ENCODE measurements at regions of chr7 and their contacts with region 1.

Region 1: DNA sequence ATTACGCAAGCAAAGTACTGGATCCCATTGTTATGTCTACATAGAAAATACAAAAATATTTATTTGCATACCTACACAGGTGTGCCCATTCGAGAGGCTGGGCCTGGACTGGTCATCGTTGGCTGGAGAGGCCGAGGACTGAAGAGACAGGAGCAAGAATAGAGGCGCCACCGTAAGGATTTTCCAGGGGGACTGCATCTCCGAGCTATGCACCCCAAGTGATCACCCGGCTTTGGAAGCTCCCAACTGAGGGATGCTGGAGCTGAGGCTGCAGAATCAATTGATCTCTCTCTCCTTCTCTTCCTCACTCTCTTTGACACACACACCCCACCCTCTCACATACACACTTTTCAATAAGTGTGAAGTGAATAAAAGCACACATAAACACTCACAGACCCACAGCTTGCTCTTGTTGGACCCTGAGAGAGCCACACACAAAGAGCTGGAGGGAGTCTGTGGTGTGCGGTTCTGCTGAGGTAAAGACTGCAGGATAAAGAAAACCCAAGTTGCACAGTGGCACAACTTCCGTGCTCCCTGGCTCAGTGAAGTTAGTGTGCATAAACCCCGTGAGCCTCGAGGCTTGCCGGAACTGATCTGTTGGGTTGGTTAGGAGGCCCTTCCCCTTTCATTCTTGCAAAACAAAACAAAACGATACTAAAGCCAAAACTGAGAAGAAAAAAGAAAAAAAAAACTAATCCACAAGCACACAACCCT is at the start of gene AOAH:
- DNase-seq: peak; percentile 87
- H3K4me3 Mint-ChIP-seq: peak within 1 kb of the TSS; percentile 70
- H3K27ac Mint-ChIP-seq: peak within 1 kb of the TSS; percentile 83
- H3K4me1 Mint-ChIP-seq: peaks cover 69% of the 10 kb centered on the region
- H3K27me3 Mint-ChIP-seq: no peaks in the 10 kb centered on the region
- total RNA-seq, gene AOAH: 2.4 to 2.6 TPM

Region 2: DNA sequence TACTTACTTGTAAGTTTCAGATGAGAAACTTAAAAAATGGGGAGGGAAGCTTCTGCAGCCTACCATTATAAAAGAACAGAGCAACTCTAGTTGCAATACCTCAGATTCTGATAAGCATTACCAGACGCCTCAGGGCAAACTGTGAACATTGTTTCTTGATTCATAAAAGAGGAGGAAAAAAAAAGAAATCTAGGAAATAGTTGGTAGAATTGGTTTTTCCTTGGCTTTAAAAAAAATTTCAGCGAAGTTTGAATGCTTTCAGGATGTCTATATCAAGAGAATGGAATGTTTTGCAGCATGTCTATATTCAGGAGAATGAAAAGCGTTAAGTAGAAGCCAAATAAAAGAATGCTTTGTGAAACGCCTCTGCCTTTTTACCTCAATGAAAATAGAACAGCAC is 352.0 kb before region 1 on chr7:
- CTCF ChIA-PET with region 1: no interaction called
- POLR2A ChIA-PET with region 1: no interaction called
- intact Hi-C with region 1: no loop called
- DNase-seq: no peak
- H3K4me3 Mint-ChIP-seq: no peak overlapping the region
- H3K27ac Mint-ChIP-seq: no peak overlapping the region
- H3K4me1 Mint-ChIP-seq: no peaks in the 10 kb centered on the region
- H3K27me3 Mint-ChIP-seq: peaks cover 4% of the 10 kb centered on the region

Region 3: GRCh38 chr7:36600869-36601530 is 123.1 kb before region 1 on chr7:
- CTCF ChIA-PET with region 1: no interaction called
- POLR2A ChIA-PET with region 1: no interaction called
- intact Hi-C with region 1: no loop called
- DNase-seq: peak; percentile 40
- H3K4me3 Mint-ChIP-seq: no peak overlapping the region
- H3K27ac Mint-ChIP-seq: no peak overlapping the region
- H3K4me1 Mint-ChIP-seq: peaks cover 53% of the 10 kb centered on the region
- H3K27me3 Mint-ChIP-seq: no peaks in the 10 kb centered on the region

Region 4: DNA sequence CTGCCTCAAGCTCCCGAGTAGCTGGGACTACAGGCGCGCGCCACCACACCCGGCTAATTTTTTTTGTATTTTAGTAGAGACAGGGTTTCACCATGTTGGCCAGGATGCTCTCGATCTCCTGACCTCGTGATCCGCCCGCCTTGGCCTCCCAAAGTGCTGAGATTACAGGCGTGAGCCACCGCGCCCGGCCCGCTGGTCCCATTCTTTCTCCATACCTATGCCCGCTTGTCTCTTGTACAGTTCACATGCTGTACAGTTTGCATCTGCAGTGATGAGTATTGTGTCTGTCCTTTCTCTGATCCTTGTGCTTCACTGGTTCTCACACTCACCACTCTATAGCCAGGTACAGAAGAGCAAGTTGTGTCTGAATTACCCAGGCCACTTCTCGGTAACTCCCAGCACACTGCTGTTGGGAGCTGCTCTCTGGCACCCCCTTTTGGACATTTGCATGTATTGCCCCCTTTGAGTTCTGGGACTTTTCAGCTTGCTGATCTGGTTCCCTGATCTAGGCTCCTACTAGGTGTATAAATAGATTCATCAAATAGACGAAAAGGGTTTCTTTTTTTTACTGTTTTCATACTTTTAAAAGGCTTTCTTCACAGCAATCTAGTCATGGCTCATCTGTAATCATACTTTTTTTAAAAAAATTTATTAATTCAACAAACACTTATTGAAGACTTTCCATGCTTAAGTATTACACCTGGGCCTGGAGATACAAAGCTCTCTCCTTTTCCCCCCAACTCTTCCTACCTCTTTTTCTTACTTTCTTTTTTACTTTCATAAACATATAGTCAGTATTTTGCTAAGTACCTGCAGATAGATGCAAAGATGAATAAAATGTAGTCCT is 53.3 kb before region 1 on chr7:
- CTCF ChIA-PET with region 1: interaction called, 10 read pairs
- POLR2A ChIA-PET with region 1: no interaction called
- intact Hi-C with region 1: no loop called
- DNase-seq: peak; percentile 81
- H3K4me3 Mint-ChIP-seq: no peak overlapping the region
- H3K27ac Mint-ChIP-seq: no peak overlapping the region
- H3K4me1 Mint-ChIP-seq: peaks cover 34% of the 10 kb centered on the region
- H3K27me3 Mint-ChIP-seq: peaks cover 2% of the 10 kb centered on the region

Region 5: GRCh38 chr7:36686499-36686898 is 37.6 kb before region 1 on chr7:
- CTCF ChIA-PET with region 1: interaction called, 5 read pairs
- POLR2A ChIA-PET with region 1: no interaction called
- intact Hi-C with region 1: loop called (anchors 1 kb)
- DNase-seq: peak; percentile 66
- H3K4me3 Mint-ChIP-seq: no peak overlapping the region
- H3K27ac Mint-ChIP-seq: peak overlapping the region; percentile 60
- H3K4me1 Mint-ChIP-seq: peaks cover 63% of the 10 kb centered on the region
- H3K27me3 Mint-ChIP-seq: no peaks in the 10 kb centered on the region

Region 6: GRCh38 chr7:36707465-36707864 is 16.6 kb before region 1 on chr7:
- CTCF ChIA-PET with region 1: interaction called, 4 read pairs
- POLR2A ChIA-PET with region 1: interaction called, 3 read pairs
- intact Hi-C with region 1: loop called (anchors 1 kb)
- DNase-seq: no peak
- H3K4me3 Mint-ChIP-seq: no peak overlapping the region
- H3K27ac Mint-ChIP-seq: peak overlapping the region; percentile 69
- H3K4me1 Mint-ChIP-seq: peaks cover 27% of the 10 kb centered on the region
- H3K27me3 Mint-ChIP-seq: peaks cover 3% of the 10 kb centered on the region

Region 7: DNA sequence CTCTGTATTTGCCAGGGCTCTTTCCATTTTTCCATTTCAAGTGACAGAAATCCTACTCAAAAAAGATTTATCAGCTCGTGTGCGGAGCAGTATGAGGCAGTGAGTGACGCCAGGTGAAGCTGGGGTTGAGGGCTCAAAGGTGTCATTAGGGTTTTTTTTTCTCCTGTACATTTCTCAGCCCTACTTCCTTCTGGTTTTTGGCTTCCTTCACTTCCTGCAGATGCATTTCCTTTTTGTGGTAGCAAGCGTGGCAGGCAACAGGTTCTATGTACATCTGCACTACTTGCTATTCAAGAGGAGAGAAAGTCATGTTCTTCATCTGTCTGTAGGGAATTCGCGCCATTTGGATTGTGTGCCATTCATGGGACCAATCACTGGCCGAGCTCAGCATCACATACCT is 53.0 kb after region 1 on chr7:
- CTCF ChIA-PET with region 1: no interaction called
- POLR2A ChIA-PET with region 1: no interaction called
- intact Hi-C with region 1: loop called (anchors 2 kb)
- DNase-seq: peak; percentile 32
- H3K4me3 Mint-ChIP-seq: peak overlapping the region; percentile 22
- H3K27ac Mint-ChIP-seq: no peak overlapping the region
- H3K4me1 Mint-ChIP-seq: peaks cover 68% of the 10 kb centered on the region
- H3K27me3 Mint-ChIP-seq: no peaks in the 10 kb centered on the region

Region 8: DNA sequence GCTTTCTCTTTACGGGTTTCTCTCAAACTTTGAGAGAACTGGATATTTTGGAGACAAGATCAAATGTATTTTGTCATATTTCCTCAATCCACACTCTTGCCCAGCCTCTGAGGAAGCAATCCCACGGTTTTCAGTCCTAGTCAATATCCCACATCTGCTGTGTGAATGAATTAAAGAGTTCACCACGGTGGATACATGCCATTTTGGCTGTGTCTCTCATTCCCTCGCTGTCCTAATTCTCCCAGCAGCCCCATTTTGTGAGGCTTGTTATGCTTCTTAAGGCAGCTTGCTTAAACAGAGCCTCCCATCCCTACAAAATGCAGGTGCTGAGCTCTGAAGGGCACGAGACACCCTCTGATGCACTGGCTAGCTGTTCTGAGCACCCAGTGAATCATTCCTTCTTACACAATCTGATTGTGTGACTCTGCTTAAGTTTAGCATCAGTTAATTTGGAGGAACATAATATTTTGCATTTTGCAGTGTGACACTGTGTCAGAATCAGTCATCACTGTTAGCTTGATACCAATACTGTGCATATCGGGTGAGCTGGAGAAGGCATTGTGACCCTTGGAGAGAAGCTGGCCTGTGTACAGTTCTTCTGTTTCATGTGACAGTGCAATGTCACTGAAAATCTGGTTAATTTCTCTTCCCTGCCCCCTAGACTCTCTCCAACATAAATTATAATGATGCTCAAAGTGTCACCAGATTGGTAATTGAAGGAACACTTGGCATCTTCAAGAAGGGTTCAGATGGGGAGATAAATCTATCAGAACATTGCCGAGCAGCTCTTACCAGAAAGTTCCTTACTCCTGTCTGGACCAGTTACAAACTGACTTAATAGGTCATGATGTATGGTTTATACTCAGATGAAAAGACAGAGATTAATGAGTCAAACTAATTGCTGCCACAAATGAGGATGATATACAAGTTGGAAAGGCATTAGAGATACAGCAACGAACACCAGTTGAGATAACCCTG is 103.9 kb after region 1 on chr7:
- CTCF ChIA-PET with region 1: no interaction called
- POLR2A ChIA-PET with region 1: no interaction called
- intact Hi-C with region 1: no loop called
- DNase-seq: no peak
- H3K4me3 Mint-ChIP-seq: no peak overlapping the region
- H3K27ac Mint-ChIP-seq: no peak overlapping the region
- H3K4me1 Mint-ChIP-seq: no peaks in the 10 kb centered on the region
- H3K27me3 Mint-ChIP-seq: no peaks in the 10 kb centered on the region

Measured in activated CD4-positive, alpha-beta memory T cell treated with anti-CD3 and anti-CD28 coated beads for 36 hours (primary cell).